ENCODE measurements at regions of chr13 and their contacts with region 1.

Region 1: DNA sequence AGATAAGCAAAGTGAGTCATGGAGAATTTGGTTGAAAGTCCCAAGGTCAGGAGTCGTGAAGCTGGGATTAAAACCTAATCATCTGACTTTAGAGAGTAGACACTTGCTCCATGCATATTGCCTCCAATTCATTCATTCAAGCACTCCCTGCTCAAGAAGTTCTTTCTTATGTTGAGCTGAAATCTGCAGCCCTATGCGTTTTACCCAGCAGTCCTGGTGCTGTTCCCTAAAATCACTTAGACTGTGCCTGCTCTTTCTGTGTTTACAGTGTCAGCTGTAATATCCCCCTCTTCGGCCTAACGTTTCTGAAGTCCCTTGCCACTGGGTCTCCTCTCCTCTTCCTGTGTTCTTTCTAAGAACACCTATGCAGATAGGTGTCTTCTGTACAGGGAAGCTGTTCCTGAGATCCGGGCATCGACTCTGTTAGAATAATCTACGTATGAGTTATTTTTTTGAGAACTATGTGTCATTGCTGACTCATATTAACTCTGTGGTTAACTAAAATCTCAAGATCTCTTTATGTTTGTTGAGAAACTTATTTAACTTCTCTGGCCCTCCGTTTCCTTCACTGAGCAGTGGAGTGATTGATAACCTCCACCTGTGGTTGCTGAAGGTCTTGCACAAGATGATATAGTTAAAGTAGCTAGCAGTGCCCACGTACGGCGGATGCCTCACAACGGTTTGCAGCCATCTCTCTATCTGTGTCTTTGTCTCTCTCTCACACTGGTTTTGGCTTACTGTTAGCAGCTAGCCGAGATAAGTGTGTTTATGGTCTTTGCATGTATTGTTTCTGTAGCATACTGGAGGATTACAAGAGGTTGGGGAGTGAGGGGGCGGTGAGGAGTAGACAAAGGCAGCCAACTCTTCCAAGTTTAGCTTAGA is 4.7 kb downstream of the ALOX5AP start:
- DNase-seq: peak; percentile 83
- ATAC-seq: peak; percentile 76
- H3K4me3 Mint-ChIP-seq: peak overlapping the region; percentile 68
- H3K27ac Mint-ChIP-seq: peak overlapping the region; percentile 87
- H3K4me1 Mint-ChIP-seq: peaks cover 81% of the 10 kb centered on the region
- H3K27me3 Mint-ChIP-seq: peaks cover 2% of the 10 kb centered on the region

Region 2: GRCh38 chr13:30224732-30225131 is 515.3 kb before region 1 on chr13:
- CTCF ChIA-PET with region 1: no interaction called
- POLR2A ChIA-PET with region 1: no interaction called
- intact Hi-C with region 1: loop called in 1 of 2 experiments (anchors 10 kb)
- DNase-seq: peak; percentile 22
- ATAC-seq: peak; percentile 96
- H3K4me3 Mint-ChIP-seq: no peak overlapping the region
- H3K27ac Mint-ChIP-seq: peak overlapping the region; percentile 10
- H3K4me1 Mint-ChIP-seq: peaks cover 10% of the 10 kb centered on the region
- H3K27me3 Mint-ChIP-seq: no peaks in the 10 kb centered on the region

Region 3: GRCh38 chr13:30371649-30372265 is 368.2 kb before region 1 on chr13:
- CTCF ChIA-PET with region 1: no interaction called
- POLR2A ChIA-PET with region 1: no interaction called
- intact Hi-C with region 1: loop called (anchors 5 to 10 kb)
- DNase-seq: peak; percentile 81
- ATAC-seq: peak; percentile 67
- H3K4me3 Mint-ChIP-seq: peak overlapping the region; percentile 59
- H3K27ac Mint-ChIP-seq: peak overlapping the region; percentile 69
- H3K4me1 Mint-ChIP-seq: peaks cover 75% of the 10 kb centered on the region
- H3K27me3 Mint-ChIP-seq: no peaks in the 10 kb centered on the region

Region 4: DNA sequence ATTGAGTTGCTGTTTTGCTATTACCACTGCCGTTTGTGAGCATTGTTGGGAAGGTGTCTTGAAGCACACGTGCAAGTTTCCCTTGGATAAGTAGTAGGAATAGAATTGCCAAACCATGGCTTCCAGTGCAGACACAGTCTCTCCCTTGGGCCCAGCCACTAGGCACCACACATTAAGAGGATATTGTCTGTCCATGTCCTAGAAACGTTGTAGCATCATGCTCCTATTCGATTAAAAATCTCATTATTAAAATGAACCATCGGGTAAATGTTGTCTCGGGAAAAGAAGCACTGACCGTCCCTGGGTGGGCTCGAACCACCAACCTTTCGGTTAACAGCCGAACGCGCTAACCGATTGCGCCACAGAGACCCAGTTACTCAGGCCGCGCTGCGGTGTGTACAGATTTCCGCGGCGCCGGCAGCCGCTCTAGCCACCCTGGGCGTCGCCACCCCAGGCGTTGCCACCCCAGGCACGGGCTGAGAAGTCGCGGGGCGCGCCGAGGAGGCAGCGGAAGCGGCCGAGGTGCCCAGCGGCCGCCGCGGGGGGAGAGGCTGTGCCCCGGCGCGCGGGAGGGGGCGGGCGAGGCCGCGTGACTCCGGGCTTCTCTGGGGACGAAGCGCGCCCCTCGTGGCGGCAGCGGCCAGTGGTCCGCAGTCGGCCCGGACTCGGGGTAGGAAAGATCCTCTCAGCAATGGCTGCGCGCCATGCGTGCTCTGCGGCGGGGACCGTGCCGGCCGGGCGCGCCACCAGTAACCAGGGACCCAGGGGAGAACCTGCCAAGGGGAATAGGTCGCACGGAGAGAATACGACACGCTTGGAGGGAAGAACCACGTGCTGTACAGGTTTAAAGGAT is 66.1 kb before region 1 on chr13:
- CTCF ChIA-PET with region 1: no interaction called
- POLR2A ChIA-PET with region 1: interaction called, 4 read pairs
- intact Hi-C with region 1: loop called (anchors 1 to 5 kb)
- DNase-seq: peak; percentile 92
- ATAC-seq: peak; percentile 97
- H3K4me3 Mint-ChIP-seq: peak overlapping the region; percentile 72
- H3K27ac Mint-ChIP-seq: peak overlapping the region; percentile 73
- H3K4me1 Mint-ChIP-seq: peaks cover 12% of the 10 kb centered on the region
- H3K27me3 Mint-ChIP-seq: no peaks in the 10 kb centered on the region

Region 5: DNA sequence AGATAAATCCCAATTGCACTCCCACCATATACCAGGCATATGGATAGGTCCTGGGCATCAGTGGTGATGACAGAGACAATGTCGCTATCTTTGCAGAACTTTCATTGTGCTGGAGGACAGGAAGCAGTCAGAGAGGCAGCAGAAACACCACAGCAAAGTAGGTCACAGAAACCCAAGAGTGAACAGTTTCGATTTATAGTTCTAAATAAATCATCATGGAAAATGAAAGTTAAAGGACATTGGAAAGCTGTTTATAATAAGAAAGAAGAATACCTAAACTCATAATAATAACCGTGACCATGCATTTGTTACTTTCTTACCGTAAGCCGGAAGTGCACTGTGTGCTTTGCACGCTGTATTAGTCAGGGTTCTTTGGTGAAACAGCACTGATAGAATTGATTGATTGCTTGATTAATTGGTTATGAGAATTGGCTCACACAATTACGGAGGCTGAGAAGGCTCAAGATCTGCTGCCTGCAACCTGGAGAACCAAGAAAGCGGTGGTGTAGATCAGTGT is 34.3 kb after region 1 on chr13:
- CTCF ChIA-PET with region 1: no interaction called
- POLR2A ChIA-PET with region 1: no interaction called
- intact Hi-C with region 1: loop called in 1 of 2 experiments (anchors 1 kb)
- DNase-seq: peak; percentile 37
- ATAC-seq: peak; percentile 92
- H3K4me3 Mint-ChIP-seq: peak overlapping the region; percentile 24
- H3K27ac Mint-ChIP-seq: peak overlapping the region; percentile 70
- H3K4me1 Mint-ChIP-seq: peaks cover 20% of the 10 kb centered on the region
- H3K27me3 Mint-ChIP-seq: peaks cover under 1% of the 10 kb centered on the region

Region 6: GRCh38 chr13:30802953-30803478 is 63.0 kb after region 1 on chr13:
- CTCF ChIA-PET with region 1: no interaction called
- POLR2A ChIA-PET with region 1: no interaction called
- intact Hi-C with region 1: loop called (anchors 2 kb)
- DNase-seq: peak; percentile 91
- ATAC-seq: peak; percentile 99
- H3K4me3 Mint-ChIP-seq: no peak overlapping the region
- H3K27ac Mint-ChIP-seq: no peak overlapping the region
- H3K4me1 Mint-ChIP-seq: peaks cover 4% of the 10 kb centered on the region
- H3K27me3 Mint-ChIP-seq: no peaks in the 10 kb centered on the region

Region 7: GRCh38 chr13:31161828-31162590 is 422.0 kb after region 1 on chr13 and contains the start of gene HSPH1:
- CTCF ChIA-PET with region 1: no interaction called
- POLR2A ChIA-PET with region 1: no interaction called
- intact Hi-C with region 1: loop called in 1 of 2 experiments (anchors 1 kb)
- DNase-seq: peak; percentile 99
- ATAC-seq: peak; percentile 91
- H3K4me3 Mint-ChIP-seq: peak within 1 kb of the TSS; percentile 88
- H3K27ac Mint-ChIP-seq: peak within 1 kb of the TSS; percentile 100
- H3K4me1 Mint-ChIP-seq: peaks cover 31% of the 10 kb centered on the region
- H3K27me3 Mint-ChIP-seq: no peaks in the 10 kb centered on the region
- total RNA-seq, gene HSPH1: 229 to 259 TPM

Measured in activated CD4-positive, alpha-beta T cell treated with anti-CD3 and anti-CD28 coated beads for 36 hours (primary cell).